A673 (cell line): ENCODE measurements at regions of chr12 and their contacts with region 1.

Region 1: DNA sequence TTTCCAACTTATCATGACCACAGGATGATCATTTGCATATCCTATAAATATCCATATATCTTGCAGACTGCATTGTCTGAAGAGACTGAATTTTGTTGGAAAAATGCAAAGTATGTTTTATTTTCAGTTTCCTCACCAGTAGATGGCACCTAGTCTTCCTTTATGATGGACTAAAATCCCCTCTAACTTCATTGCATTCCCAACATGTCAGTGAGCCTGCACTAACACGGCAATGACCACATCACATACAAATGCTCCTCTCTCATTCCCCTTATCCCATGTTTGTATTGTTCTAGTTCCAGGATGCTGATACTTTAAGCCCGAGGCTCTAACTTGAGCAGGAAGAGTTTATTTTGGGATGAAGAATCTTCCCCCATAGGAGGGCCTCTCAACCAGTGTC is 24.7 kb upstream of the MYBPC1 start:
- DNase-seq: peak; percentile 70
- H3K4me3 ChIP-seq: no peak overlapping the region
- H3K27ac ChIP-seq: no peak overlapping the region
- H3K4me1 ChIP-seq: peaks cover 4% of the 10 kb centered on the region
- H3K27me3 ChIP-seq: no peaks in the 10 kb centered on the region
- CTCF ChIP-seq: peak; percentile 59

Region 2: GRCh38 chr12:101470939-101471338 is 99.1 kb before region 1 on chr12:
- CTCF ChIA-PET with region 1: no interaction called
- POLR2A ChIA-PET with region 1: no interaction called
- intact Hi-C with region 1: no loop called
- DNase-seq: no peak
- H3K4me3 ChIP-seq: no peak overlapping the region
- H3K27ac ChIP-seq: no peak overlapping the region
- H3K4me1 ChIP-seq: no peaks in the 10 kb centered on the region
- H3K27me3 ChIP-seq: no peaks in the 10 kb centered on the region
- CTCF ChIP-seq: no peak

Region 3: DNA sequence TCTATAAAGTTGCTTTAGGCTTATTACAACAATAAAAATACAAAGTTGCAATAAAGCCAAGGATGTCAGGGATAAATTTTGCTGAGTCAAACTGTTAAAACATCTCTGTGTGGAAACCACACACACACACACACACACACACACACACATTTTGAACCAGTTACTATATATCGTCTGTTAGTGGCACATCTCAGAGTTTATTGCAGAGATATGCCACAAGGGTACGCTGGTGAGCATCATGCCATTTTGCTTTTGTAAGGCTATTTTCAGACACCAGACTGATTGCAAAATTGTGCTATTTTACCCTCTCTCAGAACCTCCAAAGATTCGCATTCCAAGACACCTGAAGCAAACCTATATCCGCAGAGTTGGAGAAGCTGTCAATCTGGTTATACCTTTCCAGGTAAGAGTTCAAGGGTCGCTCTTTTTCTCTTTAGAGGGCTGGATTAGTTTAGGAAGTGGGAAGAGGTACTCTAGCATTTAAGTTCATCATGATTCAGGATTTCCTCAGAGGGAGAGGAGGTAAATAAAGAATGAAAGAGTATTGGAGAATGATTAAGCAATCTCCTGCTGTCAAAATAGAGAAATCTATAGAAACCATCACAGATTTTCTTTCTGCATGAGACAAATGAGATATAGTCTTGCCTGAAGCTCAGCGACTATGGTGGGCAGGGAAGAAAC is 100.1 kb after region 1 on chr12:
- CTCF ChIA-PET with region 1: no interaction called
- POLR2A ChIA-PET with region 1: no interaction called
- intact Hi-C with region 1: loop called (anchors 5 kb)
- DNase-seq: peak; percentile 72
- H3K4me3 ChIP-seq: no peak overlapping the region
- H3K27ac ChIP-seq: no peak overlapping the region
- H3K4me1 ChIP-seq: no peaks in the 10 kb centered on the region
- H3K27me3 ChIP-seq: no peaks in the 10 kb centered on the region
- CTCF ChIP-seq: peak; percentile 75

Region 4: DNA sequence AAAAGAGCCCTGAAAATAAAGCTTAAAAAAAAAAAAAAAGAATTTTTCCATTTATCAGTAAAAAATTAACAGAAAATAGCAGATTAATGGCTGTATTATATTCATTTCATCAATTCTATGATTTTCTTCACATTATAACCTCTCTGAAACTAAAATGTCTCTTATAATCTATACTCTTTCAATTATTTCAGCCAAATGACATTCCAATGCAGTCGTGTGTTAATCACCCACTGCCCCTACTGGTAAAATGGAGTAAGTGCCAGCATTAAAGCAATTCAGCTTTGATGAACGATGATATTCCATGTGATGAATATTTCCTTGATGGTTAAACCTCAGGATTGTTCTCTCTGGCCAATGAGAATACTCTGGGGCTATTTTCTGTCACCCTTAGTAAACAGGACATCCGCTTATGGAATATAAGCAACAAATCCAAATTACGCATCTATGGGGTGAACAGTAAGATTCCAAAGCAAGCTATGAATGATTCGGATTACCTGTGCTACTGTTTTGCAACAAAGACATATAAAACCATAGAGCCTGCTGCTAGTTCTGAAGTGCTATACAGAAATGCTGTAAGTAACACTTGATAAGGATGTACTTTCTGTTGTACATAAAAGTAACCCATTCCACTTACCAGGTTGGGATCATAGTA is 189.5 kb after region 1 on chr12:
- CTCF ChIA-PET with region 1: no interaction called
- POLR2A ChIA-PET with region 1: no interaction called
- intact Hi-C with region 1: loop called (anchors 2 kb)
- DNase-seq: peak; percentile 57
- H3K4me3 ChIP-seq: no peak overlapping the region
- H3K27ac ChIP-seq: no peak overlapping the region
- H3K4me1 ChIP-seq: no peaks in the 10 kb centered on the region
- H3K27me3 ChIP-seq: no peaks in the 10 kb centered on the region
- CTCF ChIP-seq: peak; percentile 84

Region 5: DNA sequence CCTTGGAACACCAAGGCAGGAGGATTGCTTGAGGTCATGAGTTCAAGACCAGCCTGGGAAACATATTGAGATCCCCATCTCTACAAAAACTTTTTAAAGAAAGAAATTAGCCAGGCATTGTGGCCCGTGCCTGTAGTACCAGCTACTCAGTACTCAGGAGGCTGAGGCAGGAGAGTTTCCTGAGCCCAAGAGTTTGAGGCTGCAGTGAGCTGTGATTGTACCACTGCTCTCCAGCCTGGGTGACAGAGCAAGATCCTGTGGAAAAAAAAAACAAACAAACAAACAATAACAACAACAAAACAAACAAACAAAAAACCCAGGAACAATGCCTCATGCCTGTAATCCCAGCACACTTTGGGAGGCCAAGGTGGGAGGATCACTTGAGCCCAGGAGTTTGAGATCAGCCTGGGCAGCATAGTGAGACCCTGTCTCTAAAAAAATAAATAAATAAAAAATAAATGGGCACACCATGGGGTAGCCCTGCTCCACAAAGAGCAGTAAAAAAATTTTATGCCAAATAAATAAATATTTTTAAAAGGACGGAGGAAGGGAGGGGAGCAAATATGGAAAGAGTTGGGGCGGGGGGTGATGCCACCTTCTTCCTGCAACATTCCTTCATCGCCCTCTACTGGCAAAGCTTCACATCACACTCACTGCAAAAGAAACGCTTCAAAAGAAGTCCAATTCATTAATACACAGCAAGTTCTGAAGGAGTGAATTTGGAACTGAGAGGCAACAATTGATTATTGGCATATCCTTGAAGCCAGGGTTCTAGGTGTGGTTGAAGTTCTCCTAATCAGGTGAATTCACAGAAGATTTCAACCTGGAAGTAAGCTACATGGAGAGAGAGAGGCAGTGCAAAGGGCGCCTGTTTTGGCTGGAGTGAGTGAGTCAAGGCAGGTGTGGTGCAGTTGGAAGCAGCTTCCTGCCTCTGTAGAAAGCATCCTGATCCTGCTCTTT is 269.6 kb after region 1 on chr12:
- CTCF ChIA-PET with region 1: no interaction called
- POLR2A ChIA-PET with region 1: no interaction called
- intact Hi-C with region 1: loop called (anchors 2 kb)
- DNase-seq: peak; percentile 73
- H3K4me3 ChIP-seq: no peak overlapping the region
- H3K27ac ChIP-seq: no peak overlapping the region
- H3K4me1 ChIP-seq: no peaks in the 10 kb centered on the region
- H3K27me3 ChIP-seq: no peaks in the 10 kb centered on the region
- CTCF ChIP-seq: peak; percentile 92